Motor neuron (in vitro differentiated cells): ENCODE measurements at regions of chr13 and their contacts with region 1.

Region 1: GRCh38 chr13:48562296-48563066 is 29.6 kb upstream of the RCBTB2 start:
- ATAC-seq: no peak
- H3K4me3 ChIP-seq: no peak overlapping the region
- H3K27ac ChIP-seq: no peak overlapping the region
- H3K4me1 ChIP-seq: no peaks in the 10 kb centered on the region

Region 2: GRCh38 chr13:48400850-48401291 is 161.6 kb before region 1 on chr13:
- in situ Hi-C with region 1: loop called in 1 of 9 experiments (anchors 25 kb)
- ATAC-seq: peak in 3 of 8 experiments; percentile 60 to 91 (median 87)
- H3K4me3 ChIP-seq: no peak overlapping the region
- H3K27ac ChIP-seq: no peak overlapping the region
- H3K4me1 ChIP-seq: no peaks in the 10 kb centered on the region